CD4-positive, alpha-beta memory T cell (primary cell): ENCODE measurements at regions of chr1 and their contacts with region 1.

Region 1: GRCh38 chr1:181424786-181425403 is 58.4 kb upstream of the CACNA1E start:
- DNase-seq: peak; percentile 59 to 76 (median 69)
- H3K4me3 ChIP-seq: no peak overlapping the region
- H3K4me3 Mint-ChIP-seq: peak overlapping the region; percentile 73 to 90 (median 79)
- H3K27ac ChIP-seq: no peak overlapping the region
- H3K27ac Mint-ChIP-seq: peak overlapping the region in 5 of 7 donors; percentile 4 to 88 (median 48)
- H3K4me1 ChIP-seq: peaks cover 17% of the 10 kb centered on the region
- H3K4me1 Mint-ChIP-seq: peaks cover 11 to 19% (median 14%) of the 10 kb centered on the region in 4 donors
- H3K27me3 ChIP-seq: no peaks in the 10 kb centered on the region
- H3K27me3 Mint-ChIP-seq: peaks cover 12 to 16% of the 10 kb centered on the region in 2 donors

Region 2: GRCh38 chr1:180515864-180516388 is 909.0 kb before region 1 on chr1:
- CTCF ChIA-PET with region 1: no interaction called
- POLR2A ChIA-PET with region 1: no interaction called
- intact Hi-C with region 1: loop called (anchors 5 kb)
- DNase-seq: peak; percentile 48 to 62 (median 55)
- H3K4me3 ChIP-seq: no peak overlapping the region
- H3K4me3 Mint-ChIP-seq: no peak overlapping the region
- H3K27ac ChIP-seq: no peak overlapping the region
- H3K27ac Mint-ChIP-seq: no peak overlapping the region
- H3K4me1 ChIP-seq: peaks cover 3% of the 10 kb centered on the region
- H3K4me1 Mint-ChIP-seq: peaks cover 0 to 2% (median 1%) of the 10 kb centered on the region in 4 donors
- H3K27me3 ChIP-seq: no peaks in the 10 kb centered on the region
- H3K27me3 Mint-ChIP-seq: peaks cover 4% of the 10 kb centered on the region in 2 donors

Region 3: GRCh38 chr1:181189691-181190363 is 235.1 kb before region 1 on chr1:
- CTCF ChIA-PET with region 1: interaction called, 110 read pairs
- POLR2A ChIA-PET with region 1: interaction called, 3 read pairs
- intact Hi-C with region 1: loop called (anchors 1 kb)
- DNase-seq: peak; percentile 50 to 82 (median 71)
- H3K4me3 ChIP-seq: no peak overlapping the region
- H3K4me3 Mint-ChIP-seq: peak overlapping the region in 5 of 8 donors; percentile 21 to 50 (median 39)
- H3K27ac ChIP-seq: no peak overlapping the region
- H3K27ac Mint-ChIP-seq: peak overlapping the region in 1 of 7 donors; percentile 48
- H3K4me1 ChIP-seq: no peaks in the 10 kb centered on the region
- H3K4me1 Mint-ChIP-seq: peaks cover 0 to 4% (median 3%) of the 10 kb centered on the region in 4 donors
- H3K27me3 ChIP-seq: no peaks in the 10 kb centered on the region
- H3K27me3 Mint-ChIP-seq: peaks cover 1 to 16% of the 10 kb centered on the region in 2 donors

Region 4: DNA sequence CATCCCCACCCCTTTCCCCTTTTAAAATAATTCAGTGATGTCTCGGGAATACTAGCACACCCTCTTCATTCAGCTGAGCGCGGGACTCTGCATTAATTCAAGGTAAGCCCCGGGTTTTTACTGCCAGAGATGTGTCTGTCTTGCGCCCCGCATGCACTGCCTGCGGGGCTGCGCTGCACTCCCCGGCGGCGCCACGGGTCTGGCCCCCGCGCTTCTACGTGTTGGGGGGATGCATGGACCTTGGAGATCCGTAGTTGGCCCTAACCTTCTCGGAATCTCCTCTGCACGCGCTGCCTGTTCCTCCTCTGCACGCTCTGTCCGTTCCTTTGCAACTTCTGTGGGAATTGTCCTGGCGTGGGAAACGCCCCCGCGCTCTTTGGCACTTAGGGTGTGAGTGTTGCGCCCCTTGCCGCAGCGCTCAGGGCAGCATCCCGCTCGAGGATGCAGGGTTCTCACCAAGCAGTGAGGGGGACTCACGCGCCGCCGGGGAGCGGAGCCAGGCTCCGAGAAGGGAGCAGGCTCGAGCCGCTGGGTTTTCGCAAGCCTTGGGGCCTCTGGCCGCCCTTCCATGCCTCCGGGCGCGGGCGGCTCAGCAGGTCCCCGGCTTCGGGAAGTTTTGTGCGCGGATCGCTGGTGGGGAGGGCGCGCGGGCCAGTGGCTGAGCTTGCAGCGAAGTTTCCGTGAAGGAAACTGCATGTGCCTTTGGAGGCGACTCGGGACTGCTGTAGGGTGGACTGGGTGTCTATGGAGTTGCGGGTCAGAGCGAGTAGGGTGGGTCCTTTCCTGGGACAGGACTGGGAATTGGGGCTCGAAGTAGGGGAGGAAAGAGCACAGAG is 106.7 kb before region 1 on chr1:
- CTCF ChIA-PET with region 1: interaction called, 7 read pairs
- POLR2A ChIA-PET with region 1: no interaction called
- intact Hi-C with region 1: loop called (anchors 1 kb)
- DNase-seq: peak in 1 of 5 donors; percentile 11
- H3K4me3 ChIP-seq: peak overlapping the region in 1 of 2 donors; percentile 5
- H3K4me3 Mint-ChIP-seq: peak overlapping the region; percentile 60 to 90 (median 80)
- H3K27ac ChIP-seq: no peak overlapping the region
- H3K27ac Mint-ChIP-seq: no peak overlapping the region
- H3K4me1 ChIP-seq: peaks cover 12% of the 10 kb centered on the region
- H3K4me1 Mint-ChIP-seq: peaks cover 19 to 27% (median 21%) of the 10 kb centered on the region in 4 donors
- H3K27me3 ChIP-seq: peaks cover 22% of the 10 kb centered on the region
- H3K27me3 Mint-ChIP-seq: peaks cover 34 to 51% of the 10 kb centered on the region in 2 donors

Region 5: DNA sequence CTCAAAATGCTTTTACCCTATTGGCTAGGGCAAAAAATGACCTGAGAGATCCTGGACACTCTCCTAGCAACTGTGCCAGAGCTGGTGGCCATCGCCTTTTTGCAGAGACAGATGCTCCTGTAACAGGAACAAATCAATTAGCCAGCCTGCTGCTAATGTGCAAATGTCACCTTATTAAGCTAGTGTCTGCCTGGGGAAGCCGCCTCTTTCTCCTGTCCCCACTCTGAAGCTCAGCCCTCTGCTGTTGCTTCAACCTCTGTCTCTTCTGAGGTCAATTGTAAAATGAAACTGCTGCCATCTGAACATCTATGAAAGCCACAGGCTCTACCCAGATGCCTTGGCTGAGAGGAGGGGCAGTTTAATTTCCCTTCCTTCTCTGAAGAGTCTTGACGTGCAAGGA is 27.1 kb before region 1 on chr1:
- CTCF ChIA-PET with region 1: interaction called, 68 read pairs
- POLR2A ChIA-PET with region 1: interaction called, 11 read pairs
- intact Hi-C with region 1: loop called (anchors 1 kb)
- DNase-seq: peak; percentile 41 to 56 (median 50)
- H3K4me3 ChIP-seq: peak overlapping the region; percentile 13 to 25
- H3K4me3 Mint-ChIP-seq: peak overlapping the region; percentile 65 to 86 (median 74)
- H3K27ac ChIP-seq: peak overlapping the region; percentile 37
- H3K27ac Mint-ChIP-seq: peak overlapping the region in 5 of 7 donors; percentile 78 to 97 (median 95)
- H3K4me1 ChIP-seq: peaks cover 64% of the 10 kb centered on the region
- H3K4me1 Mint-ChIP-seq: peaks cover 9 to 35% (median 29%) of the 10 kb centered on the region in 4 donors
- H3K27me3 ChIP-seq: no peaks in the 10 kb centered on the region
- H3K27me3 Mint-ChIP-seq: no peaks in the 10 kb centered on the region